ENCODE measurements at regions of chr9 and their contacts with region 1.

Region 1: GRCh38 chr9:69085569-69086283 is 50.2 kb downstream of the FXN start:
- DNase-seq: no peak
- H3K4me3 ChIP-seq: no peak overlapping the region
- H3K27ac ChIP-seq: no peak overlapping the region
- H3K4me1 ChIP-seq: peaks cover 0 to 15% (median 9%) of the 10 kb centered on the region in 4 experiments; a peak in 6 of 7 replicates
- H3K27me3 ChIP-seq: no peaks in the 10 kb centered on the region
- CTCF ChIP-seq: no peak
- EP300 ChIP-seq: no peak
- POLR2A ChIP-seq: no peak
- RAD21 ChIP-seq: no peak

Region 2: GRCh38 chr9:69066955-69067354 is 18.8 kb before region 1 on chr9:
- CTCF ChIA-PET with region 1: interaction called, 13 read pairs
- POLR2A ChIA-PET with region 1: interaction called, 7 read pairs
- DNase-seq: peak in 1 of 2 experiments; percentile 71
- H3K4me3 ChIP-seq: no peak overlapping the region
- H3K27ac ChIP-seq: no peak overlapping the region
- H3K4me1 ChIP-seq: peaks cover 2 to 3% (median 2%) of the 10 kb centered on the region in 4 experiments; a peak in 4 of 7 replicates
- H3K27me3 ChIP-seq: no peaks in the 10 kb centered on the region
- CTCF ChIP-seq: peak in 2 of 3 experiments; percentile 55 to 60; a peak in 2 of 4 replicates
- EP300 ChIP-seq: no peak
- POLR2A ChIP-seq: no peak
- RAD21 ChIP-seq: peak; percentile 15 to 43; a peak in 3 of 4 replicates

Measured in H1 (cell line).